Activated CD4-positive, alpha-beta T cell treated with anti-CD3 and anti-CD28 coated beads, Interleukin-2, amount 10 ng/mL, durations not matched to agents 24 days and 14 days (primary cell): ENCODE measurements at regions of chr6 and their contacts with region 1.

Region 1: DNA sequence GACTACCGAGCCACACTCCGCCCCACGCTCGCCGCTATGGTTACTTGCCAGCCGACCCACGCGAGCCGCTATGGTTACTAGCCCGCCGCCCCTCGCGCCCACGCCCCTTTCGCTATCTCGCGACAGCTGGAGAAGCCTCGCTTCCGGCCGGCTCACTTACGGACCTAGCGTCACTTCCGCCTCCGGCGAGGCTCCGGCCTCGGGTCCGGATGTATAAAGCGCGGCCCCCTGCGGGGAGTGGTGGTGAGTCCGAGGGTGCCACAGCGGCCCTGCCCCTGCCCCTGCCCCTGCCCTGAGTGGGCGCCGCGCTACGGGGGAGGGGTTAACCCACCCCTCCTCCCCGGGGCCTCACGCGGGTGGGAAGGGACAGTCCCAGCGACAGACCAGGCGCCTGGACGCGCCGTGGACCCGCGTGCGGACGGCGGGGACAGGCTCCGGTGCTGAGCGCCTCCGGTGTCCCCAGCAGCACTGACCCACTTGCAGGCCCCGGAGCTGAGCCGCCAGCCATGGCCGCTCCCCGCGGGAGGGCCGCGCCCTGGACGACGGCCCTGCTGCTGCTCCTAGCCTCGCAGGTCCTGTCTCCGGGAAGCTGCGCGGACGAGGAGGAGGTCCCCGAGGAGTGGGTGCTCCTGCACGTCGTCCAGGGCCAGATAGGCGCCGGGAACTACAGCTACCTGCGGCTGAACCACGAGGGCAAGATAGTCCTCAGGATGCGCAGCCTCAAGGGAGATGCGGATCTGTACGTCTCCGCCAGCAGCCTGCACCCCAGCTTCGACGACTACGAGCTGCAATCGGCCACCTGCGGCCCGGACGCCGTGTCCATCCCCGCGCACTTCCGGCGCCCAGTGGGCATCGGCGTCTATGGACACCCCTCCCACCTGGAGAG is at the starts of genes C6orf120 and WDR27:
- DNase-seq: peak; percentile 99
- H3K4me3 Mint-ChIP-seq: peak within 1 kb of the TSS; percentile 94
- H3K27ac Mint-ChIP-seq: peak within 1 kb of the TSS; percentile 89
- H3K4me1 Mint-ChIP-seq: peaks cover 29% of the 10 kb centered on the region
- H3K27me3 Mint-ChIP-seq: no peaks in the 10 kb centered on the region
- total RNA-seq, gene C6orf120: 23.2 and 23.8 TPM in 2 replicates
- total RNA-seq, gene WDR27: 29.0 and 33.3 TPM in 2 replicates

Region 2: DNA sequence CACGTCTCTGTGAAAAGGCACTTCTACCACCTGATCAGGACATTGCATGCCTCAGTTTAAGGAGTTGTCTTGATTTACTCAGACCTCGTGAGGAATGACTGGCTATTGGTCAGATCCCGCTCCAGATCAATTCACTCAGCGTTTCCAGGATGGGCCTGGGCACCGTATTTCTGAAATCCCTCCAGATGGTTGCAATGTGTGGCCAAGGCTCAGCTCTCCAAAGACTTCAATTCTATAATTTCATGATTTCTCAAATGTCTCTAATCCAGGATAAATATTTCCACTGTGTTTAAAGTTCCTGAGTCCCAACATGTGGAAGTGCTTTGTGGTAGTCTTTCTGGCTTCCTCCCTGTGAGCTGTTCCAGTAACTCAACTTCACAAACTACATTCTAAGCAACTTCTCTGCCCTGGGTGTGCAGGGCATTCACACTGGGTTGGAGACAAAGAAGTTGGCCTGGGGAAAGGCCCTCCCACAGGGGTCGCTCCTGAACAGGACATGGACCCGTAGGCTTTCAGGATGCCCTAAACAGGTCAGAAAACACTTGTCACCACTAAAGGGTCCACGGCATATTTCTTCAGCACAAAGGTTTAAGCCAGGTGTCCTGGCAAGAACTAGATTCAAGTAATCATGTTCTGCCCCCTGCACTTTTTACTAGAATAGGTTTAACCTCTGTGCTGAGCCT is 212.5 kb before region 1 on chr6:
- intact Hi-C with region 1: no loop called
- DNase-seq: no peak
- H3K4me3 Mint-ChIP-seq: no peak overlapping the region
- H3K27ac Mint-ChIP-seq: no peak overlapping the region
- H3K4me1 Mint-ChIP-seq: no peaks in the 10 kb centered on the region
- H3K27me3 Mint-ChIP-seq: no peaks in the 10 kb centered on the region

Region 3: GRCh38 chr6:169556758-169557548 is 145.2 kb before region 1 on chr6:
- intact Hi-C with region 1: loop called (anchors 2 kb)
- DNase-seq: peak; percentile 74
- H3K4me3 Mint-ChIP-seq: peak overlapping the region; percentile 39
- H3K27ac Mint-ChIP-seq: peak overlapping the region; percentile 22
- H3K4me1 Mint-ChIP-seq: peaks cover 11% of the 10 kb centered on the region
- H3K27me3 Mint-ChIP-seq: peaks cover 26% of the 10 kb centered on the region

Region 4: GRCh38 chr6:169654598-169655391 is 47.4 kb before region 1 on chr6:
- intact Hi-C with region 1: loop called (anchors 2 kb)
- DNase-seq: peak; percentile 92
- H3K4me3 Mint-ChIP-seq: peak overlapping the region; percentile 91
- H3K27ac Mint-ChIP-seq: peak overlapping the region; percentile 75
- H3K4me1 Mint-ChIP-seq: peaks cover 7% of the 10 kb centered on the region
- H3K27me3 Mint-ChIP-seq: no peaks in the 10 kb centered on the region

Region 5: DNA sequence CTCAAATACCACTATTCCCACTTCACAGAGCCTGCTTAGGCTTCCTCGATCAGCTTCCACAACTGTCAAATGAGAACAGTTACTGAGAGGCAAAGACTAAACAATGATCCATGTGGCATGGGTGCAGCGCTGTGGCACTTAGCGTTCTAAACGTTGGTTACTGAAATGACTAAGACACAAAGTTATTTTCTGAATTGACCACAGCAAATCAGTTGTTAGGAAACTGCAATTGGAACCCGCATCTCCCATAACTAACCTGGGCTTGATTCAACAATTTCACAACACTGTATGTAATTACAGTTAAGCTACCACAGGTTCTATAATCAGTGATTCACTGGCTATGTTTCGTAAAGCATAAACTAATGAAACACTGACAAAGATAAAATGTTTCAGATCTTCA is 12.9 kb before region 1 on chr6:
- intact Hi-C with region 1: no loop called
- DNase-seq: peak; percentile 44
- H3K4me3 Mint-ChIP-seq: no peak overlapping the region
- H3K27ac Mint-ChIP-seq: no peak overlapping the region
- H3K4me1 Mint-ChIP-seq: no peaks in the 10 kb centered on the region
- H3K27me3 Mint-ChIP-seq: no peaks in the 10 kb centered on the region

Region 6: DNA sequence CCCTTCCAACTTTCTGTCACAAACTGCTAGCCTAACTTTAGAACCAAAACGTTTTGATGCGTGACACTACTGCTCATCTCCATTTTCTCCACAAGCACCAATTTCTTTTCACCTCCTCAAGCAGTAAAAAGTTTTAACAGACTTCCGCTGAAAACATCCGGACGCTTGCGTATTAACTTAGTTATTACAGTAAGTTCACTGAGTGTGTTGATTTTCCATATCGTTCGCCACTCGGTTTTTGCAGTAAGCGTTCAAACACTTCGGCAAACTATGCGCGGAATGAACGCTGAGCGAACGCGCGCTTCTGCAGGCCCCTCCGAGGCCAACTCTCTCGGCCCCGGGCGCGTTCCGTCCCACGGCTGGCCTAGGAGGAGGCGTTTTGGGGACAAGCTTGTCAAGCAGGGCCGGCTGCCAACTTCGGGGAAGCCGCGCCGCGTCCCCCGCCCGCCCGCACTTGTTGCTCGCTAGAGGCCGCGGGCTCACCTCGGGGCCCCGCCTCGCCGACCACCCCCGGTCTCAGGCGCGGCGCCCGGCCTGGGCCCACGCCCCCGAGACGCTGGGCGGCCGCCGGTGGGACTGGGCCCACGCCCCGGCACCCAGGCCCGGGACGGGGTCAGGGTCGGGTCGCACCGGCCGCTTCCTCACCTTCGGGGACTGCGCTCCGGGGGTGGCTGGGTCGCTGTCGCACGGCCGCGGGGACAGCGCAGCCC is 21.2 kb after region 1 on chr6:
- intact Hi-C with region 1: loop called (anchors 1 kb)
- DNase-seq: peak; percentile 89
- H3K4me3 Mint-ChIP-seq: peak overlapping the region; percentile 90
- H3K27ac Mint-ChIP-seq: peak overlapping the region; percentile 94
- H3K4me1 Mint-ChIP-seq: peaks cover 28% of the 10 kb centered on the region
- H3K27me3 Mint-ChIP-seq: peaks cover 5% of the 10 kb centered on the region

Region 7: GRCh38 chr6:169751242-169752073 is 49.3 kb after region 1 on chr6 and contains the starts of genes DYNLT2 and ERMARD:
- intact Hi-C with region 1: loop called (anchors 1 kb)
- DNase-seq: peak; percentile 99
- H3K4me3 Mint-ChIP-seq: peak within 1 kb of the TSS; percentile 100
- H3K27ac Mint-ChIP-seq: peak within 1 kb of the TSS; percentile 100
- H3K4me1 Mint-ChIP-seq: peaks cover 28% of the 10 kb centered on the region
- H3K27me3 Mint-ChIP-seq: peaks cover 2% of the 10 kb centered on the region
- total RNA-seq, gene DYNLT2: 2.1 TPM in 2 replicates
- total RNA-seq, gene ERMARD: 26.2 and 27.9 TPM in 2 replicates

Region 8: GRCh38 chr6:170554013-170554795 is 852.0 kb after region 1 on chr6 and contains the start of gene TBP:
- intact Hi-C with region 1: loop called (anchors 1 kb)
- DNase-seq: peak; percentile 99
- H3K4me3 Mint-ChIP-seq: no peak within 1 kb of the TSS
- H3K27ac Mint-ChIP-seq: no peak within 1 kb of the TSS
- H3K4me1 Mint-ChIP-seq: peaks cover 31% of the 10 kb centered on the region
- H3K27me3 Mint-ChIP-seq: no peaks in the 10 kb centered on the region
- total RNA-seq, gene TBP: 28.4 and 29.2 TPM in 2 replicates

Region 9: DNA sequence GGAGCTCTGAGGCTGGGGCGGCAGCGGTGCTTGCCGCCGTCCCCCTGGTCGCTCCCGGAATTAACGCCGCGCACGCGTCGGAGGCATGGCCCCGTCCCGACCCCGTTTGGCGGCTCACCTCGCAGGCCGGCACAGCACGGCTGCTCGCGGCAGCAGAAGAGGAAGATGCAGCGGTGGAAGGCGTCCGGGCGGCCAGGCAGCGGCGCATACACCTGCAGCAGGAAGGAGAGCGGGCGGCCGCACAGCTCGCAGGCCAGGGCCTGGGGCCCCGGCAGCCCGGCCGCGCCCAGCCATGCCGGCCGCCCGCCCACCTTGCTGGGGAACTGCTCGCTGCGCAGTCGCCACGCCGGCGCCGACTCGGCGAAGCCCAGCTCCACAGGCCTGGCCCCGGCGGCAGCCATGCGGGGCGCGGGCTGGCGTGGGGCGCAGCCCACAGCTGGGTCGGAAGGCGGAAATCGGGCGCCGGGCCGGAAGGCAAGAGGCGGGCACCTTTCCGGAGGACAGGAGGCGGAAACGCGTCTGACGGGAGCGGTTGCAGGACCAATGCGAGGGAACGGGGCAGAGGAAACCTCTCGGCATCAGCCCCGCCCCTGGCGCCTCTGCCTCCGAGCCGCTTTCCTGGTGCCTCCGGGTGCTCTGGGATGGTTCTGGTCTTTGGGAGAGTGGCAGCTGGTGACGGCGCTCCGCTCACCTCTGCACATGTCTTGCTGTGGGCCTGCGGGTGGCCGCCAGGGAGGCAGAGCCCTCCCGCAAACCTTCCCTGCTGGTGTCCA is 882.2 kb after region 1 on chr6 and contains the start of gene PDCD2:
- intact Hi-C with region 1: loop called (anchors 5 kb)
- DNase-seq: peak; percentile 98
- H3K4me3 Mint-ChIP-seq: peak within 1 kb of the TSS; percentile 100
- H3K27ac Mint-ChIP-seq: peak within 1 kb of the TSS; percentile 97
- H3K4me1 Mint-ChIP-seq: peaks cover 24% of the 10 kb centered on the region
- H3K27me3 Mint-ChIP-seq: peaks cover 3% of the 10 kb centered on the region
- total RNA-seq, gene PDCD2: 138 and 139 TPM in 2 replicates